ENCODE measurements at regions of chr2 and their contacts with region 1.

Region 1: GRCh38 chr2:75560768-75561565 is at the start of gene EVA1A:
- DNase-seq: no peak
- H3K4me3 ChIP-seq: peak within 1 kb of the TSS; percentile 83
- CTCF ChIP-seq: no peak

Region 2: DNA sequence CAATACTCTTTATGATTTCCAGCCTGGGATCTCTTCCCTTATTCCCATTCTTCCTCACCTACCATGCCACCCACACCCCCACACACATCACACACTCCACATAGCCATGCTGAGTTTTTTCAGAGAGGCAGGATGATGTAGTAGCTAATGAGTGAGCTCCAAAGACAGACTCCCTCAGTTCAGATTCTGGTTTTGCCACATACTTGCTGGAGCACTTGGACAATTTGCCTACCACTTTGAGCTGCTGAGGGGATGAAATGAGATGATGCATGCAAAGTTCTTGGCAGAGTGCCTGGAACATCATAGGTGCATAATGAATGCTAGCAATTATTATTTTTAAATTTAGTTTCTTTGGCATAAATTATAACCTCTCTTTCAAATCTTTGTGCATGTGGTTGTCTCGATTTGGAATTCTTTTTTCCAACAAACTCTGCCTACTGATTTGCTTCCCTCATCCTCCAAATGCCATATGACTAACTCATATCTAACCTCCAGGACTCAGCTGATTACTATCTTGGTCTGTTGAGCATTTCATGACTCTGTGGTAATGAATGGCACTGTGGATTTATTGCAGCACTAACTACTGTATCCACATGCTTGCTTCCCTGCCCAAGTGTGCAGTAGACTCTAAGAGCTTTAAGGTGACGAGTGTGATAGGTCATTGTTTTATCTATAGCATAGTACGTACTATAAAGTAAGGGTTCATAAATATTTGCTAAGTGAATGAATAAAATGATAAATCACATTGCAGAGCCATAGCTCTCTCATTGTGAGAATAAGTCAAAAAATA is 460.8 kb before region 1 on chr2:
- CTCF ChIA-PET with region 1: no interaction called
- POLR2A ChIA-PET with region 1: no interaction called
- DNase-seq: peak; percentile 81
- H3K4me3 ChIP-seq: no peak overlapping the region
- CTCF ChIP-seq: no peak

Region 3: DNA sequence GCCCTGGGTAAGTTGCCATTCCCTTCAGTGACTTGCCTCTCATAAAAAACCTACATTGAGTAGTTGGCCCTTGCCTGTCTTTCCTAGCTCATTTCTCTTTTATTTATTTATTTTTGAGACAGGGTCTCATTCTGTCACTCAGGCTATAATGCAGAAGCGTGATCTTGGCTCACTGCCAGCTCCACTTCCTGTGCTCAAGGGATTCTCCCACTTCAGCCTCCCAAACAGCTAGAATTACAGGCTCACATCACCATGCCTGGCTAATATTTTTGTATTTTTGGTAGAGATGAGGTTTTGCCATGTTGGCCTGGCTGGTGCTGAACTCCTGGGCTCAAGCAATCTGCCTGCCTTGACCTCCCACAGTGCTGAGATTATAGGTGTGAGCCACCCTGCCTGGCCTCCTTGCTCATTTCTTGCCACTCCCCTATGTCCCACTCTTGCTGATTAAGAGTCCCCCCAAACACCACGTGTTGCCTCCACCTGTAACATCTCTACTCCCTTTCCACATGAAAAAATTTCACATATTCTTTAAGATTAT is 12.9 kb before region 1 on chr2:
- CTCF ChIA-PET with region 1: interaction called, 17 read pairs
- POLR2A ChIA-PET with region 1: interaction called, 3 read pairs
- DNase-seq: no peak
- H3K4me3 ChIP-seq: no peak overlapping the region
- CTCF ChIP-seq: no peak

Region 4: DNA sequence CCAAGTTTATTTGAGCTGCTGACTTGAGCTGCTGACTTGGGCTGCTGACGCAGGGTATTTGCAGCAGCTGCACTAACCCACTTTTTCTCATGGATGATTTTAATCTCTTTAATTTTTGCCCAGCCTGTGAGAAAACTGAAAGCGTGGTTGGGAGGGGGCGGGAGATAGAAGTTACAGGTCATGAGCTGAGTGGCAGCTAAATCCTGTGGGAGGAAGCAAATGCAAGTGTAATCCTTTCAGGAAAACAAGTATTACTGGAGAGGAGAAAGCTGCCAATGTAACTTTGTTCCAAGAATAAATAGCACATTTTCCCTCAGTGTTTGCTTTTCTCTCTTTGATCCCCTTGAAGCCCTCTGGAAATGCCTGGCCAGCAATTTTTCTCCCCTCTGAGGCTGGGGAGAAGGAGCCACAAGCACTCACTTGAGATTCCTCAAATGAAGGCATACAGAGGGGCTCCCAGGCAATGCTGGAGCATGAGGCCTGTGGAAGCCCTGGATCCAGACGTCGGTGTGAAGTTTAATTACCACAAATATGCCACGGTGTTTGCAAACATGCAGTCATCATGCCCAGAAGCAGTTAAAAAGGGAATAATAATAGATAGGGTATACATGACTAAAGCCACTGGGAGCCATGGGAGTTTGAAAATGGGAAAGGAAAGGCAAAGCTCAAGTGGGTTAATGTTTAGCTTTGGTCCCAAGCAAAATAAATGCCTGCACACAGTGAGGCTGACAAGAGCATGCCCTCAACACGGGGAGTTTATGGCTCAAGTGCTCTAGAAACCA is 10.2 kb after region 1 on chr2:
- CTCF ChIA-PET with region 1: interaction called, 21 read pairs
- POLR2A ChIA-PET with region 1: interaction called, 3 read pairs
- DNase-seq: no peak
- H3K4me3 ChIP-seq: no peak overlapping the region
- CTCF ChIP-seq: no peak

Region 5: GRCh38 chr2:75592028-75592427 is 31.1 kb after region 1 on chr2:
- CTCF ChIA-PET with region 1: interaction called, 8 read pairs
- POLR2A ChIA-PET with region 1: interaction called, 18 read pairs
- DNase-seq: no peak
- H3K4me3 ChIP-seq: no peak overlapping the region
- CTCF ChIP-seq: no peak

Measured in AG04449 (cell line).